CD4-positive, alpha-beta T cell (primary cell): ENCODE measurements at regions of chr6 and their contacts with region 1.

Region 1: GRCh38 chr6:139124887-139125672 is 9.8 kb upstream of the HECA start:
- DNase-seq: peak; percentile 60 to 95 (median 76)
- ATAC-seq: peak; percentile 98
- H3K4me3 ChIP-seq: peak overlapping the region; percentile 1
- H3K4me3 Mint-ChIP-seq: peak overlapping the region; percentile 66
- H3K27ac ChIP-seq: peak overlapping the region; percentile 64 to 66
- H3K27ac Mint-ChIP-seq: peak overlapping the region; percentile 88
- H3K4me1 ChIP-seq: peaks cover 40% of the 10 kb centered on the region
- H3K4me1 Mint-ChIP-seq: peaks cover 57% of the 10 kb centered on the region
- H3K27me3 ChIP-seq: no peaks in the 10 kb centered on the region
- H3K27me3 Mint-ChIP-seq: no peaks in the 10 kb centered on the region
- CTCF ChIP-seq: peak; percentile 80

Region 2: GRCh38 chr6:137958811-137959565 is 1166.1 kb before region 1 on chr6:
- CTCF ChIA-PET with region 1: no interaction called
- POLR2A ChIA-PET with region 1: no interaction called
- intact Hi-C with region 1: no loop called
- DNase-seq: peak in 2 of 14 experiments; percentile 40 to 48
- ATAC-seq: no peak
- H3K4me3 ChIP-seq: no peak overlapping the region
- H3K4me3 Mint-ChIP-seq: no peak overlapping the region
- H3K27ac ChIP-seq: no peak overlapping the region
- H3K27ac Mint-ChIP-seq: no peak overlapping the region
- H3K4me1 ChIP-seq: no peaks in the 10 kb centered on the region
- H3K4me1 Mint-ChIP-seq: peaks cover 5% of the 10 kb centered on the region
- H3K27me3 ChIP-seq: no peaks in the 10 kb centered on the region
- H3K27me3 Mint-ChIP-seq: no peaks in the 10 kb centered on the region
- CTCF ChIP-seq: no peak

Region 3: GRCh38 chr6:139146317-139146726 is 21.2 kb after region 1 on chr6:
- CTCF ChIA-PET with region 1: interaction called, 3 read pairs
- POLR2A ChIA-PET with region 1: interaction called, 59 read pairs
- intact Hi-C with region 1: no loop called
- DNase-seq: peak in 1 of 14 experiments; percentile 38
- ATAC-seq: no peak
- H3K4me3 ChIP-seq: peak overlapping the region; percentile 29
- H3K4me3 Mint-ChIP-seq: peak overlapping the region; percentile 61
- H3K27ac ChIP-seq: peak overlapping the region in 1 of 2 donors; percentile 11
- H3K27ac Mint-ChIP-seq: peak overlapping the region; percentile 80
- H3K4me1 ChIP-seq: peaks cover 76% of the 10 kb centered on the region
- H3K4me1 Mint-ChIP-seq: peaks cover 95% of the 10 kb centered on the region
- H3K27me3 ChIP-seq: no peaks in the 10 kb centered on the region
- H3K27me3 Mint-ChIP-seq: no peaks in the 10 kb centered on the region
- CTCF ChIP-seq: no peak

Region 4: GRCh38 chr6:139173172-139173571 is 48.1 kb after region 1 on chr6:
- CTCF ChIA-PET with region 1: interaction called, 15 read pairs
- POLR2A ChIA-PET with region 1: interaction called, 6 read pairs
- intact Hi-C with region 1: loop called in 1 of 2 experiments (anchors 1 kb)
- DNase-seq: peak in 4 of 14 experiments; percentile 42 to 70 (median 54)
- ATAC-seq: peak; percentile 71
- H3K4me3 ChIP-seq: no peak overlapping the region
- H3K4me3 Mint-ChIP-seq: peak overlapping the region; percentile 40
- H3K27ac ChIP-seq: peak overlapping the region; percentile 31 to 49
- H3K27ac Mint-ChIP-seq: peak overlapping the region; percentile 48
- H3K4me1 ChIP-seq: peaks cover 69% of the 10 kb centered on the region
- H3K4me1 Mint-ChIP-seq: peaks cover 95% of the 10 kb centered on the region
- H3K27me3 ChIP-seq: no peaks in the 10 kb centered on the region
- H3K27me3 Mint-ChIP-seq: no peaks in the 10 kb centered on the region
- CTCF ChIP-seq: peak; percentile 39

Region 5: DNA sequence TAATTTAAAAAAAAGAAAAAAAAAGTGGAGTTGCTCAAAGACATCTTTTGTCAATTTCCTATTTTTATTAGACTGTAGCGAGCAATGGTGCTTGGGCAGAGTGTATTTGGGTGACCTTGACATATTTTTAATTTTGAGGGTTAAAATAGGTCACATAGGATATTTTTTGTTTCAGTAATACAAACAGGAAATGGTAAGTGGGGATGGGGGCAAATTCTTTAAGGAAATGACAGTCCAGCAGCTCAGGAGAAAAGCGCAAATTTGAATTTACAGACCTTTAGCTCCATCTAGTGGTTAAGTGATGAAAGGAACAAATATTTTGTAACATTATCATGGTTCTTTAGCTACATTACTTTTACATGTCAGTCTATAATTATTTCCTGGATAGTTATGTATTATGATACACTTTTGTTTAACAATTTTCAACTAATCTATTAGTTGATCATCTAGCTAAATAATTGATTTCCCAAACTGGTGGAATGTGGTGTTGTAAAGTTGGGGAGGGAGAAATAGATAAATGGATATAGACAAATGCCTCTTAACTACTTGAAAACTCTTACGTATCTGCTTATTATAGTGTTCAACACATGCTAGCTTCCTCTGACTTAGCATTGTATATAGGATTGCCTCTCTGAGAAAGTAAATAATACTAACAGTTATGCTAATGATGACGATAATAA is 239.4 kb after region 1 on chr6:
- CTCF ChIA-PET with region 1: interaction called, 21 read pairs
- POLR2A ChIA-PET with region 1: interaction called, 12 read pairs
- intact Hi-C with region 1: loop called (anchors 1 to 2 kb)
- DNase-seq: peak in 3 of 14 experiments; percentile 72 to 75 (median 72)
- ATAC-seq: peak; percentile 59
- H3K4me3 ChIP-seq: no peak overlapping the region
- H3K4me3 Mint-ChIP-seq: no peak overlapping the region
- H3K27ac ChIP-seq: no peak overlapping the region
- H3K27ac Mint-ChIP-seq: no peak overlapping the region
- H3K4me1 ChIP-seq: peaks cover 9% of the 10 kb centered on the region
- H3K4me1 Mint-ChIP-seq: peaks cover 58% of the 10 kb centered on the region
- H3K27me3 ChIP-seq: no peaks in the 10 kb centered on the region
- H3K27me3 Mint-ChIP-seq: no peaks in the 10 kb centered on the region
- CTCF ChIP-seq: peak; percentile 91